ENCODE measurements at regions of chr6 and their contacts with region 1.

Region 1: GRCh38 chr6:30483677-30484279 is 5.5 kb upstream of the HLA-E start:
- DNase-seq: peak in 1 of 2 donors; percentile 53
- H3K4me3 ChIP-seq: no peak overlapping the region
- H3K27ac ChIP-seq: no peak overlapping the region
- H3K4me1 ChIP-seq: peaks cover 0 to under 1% of the 10 kb centered on the region in 2 donors
- H3K27me3 ChIP-seq: peaks cover 0 to 30% of the 10 kb centered on the region in 2 donors
- CTCF ChIP-seq: peak; percentile 46 to 88 (median 62)
- POLR2A ChIP-seq: no peak

Region 2: GRCh38 chr6:30515932-30516753 is 32.4 kb after region 1 on chr6:
- intact Hi-C with region 1: no loop called
- DNase-seq: peak; percentile 84 to 94
- H3K4me3 ChIP-seq: peak overlapping the region; percentile 37 to 44
- H3K27ac ChIP-seq: peak overlapping the region; percentile 88 to 91
- H3K4me1 ChIP-seq: no peaks in the 10 kb centered on the region
- H3K27me3 ChIP-seq: no peaks in the 10 kb centered on the region
- CTCF ChIP-seq: no peak
- POLR2A ChIP-seq: peak; percentile 51 to 75

Region 3: DNA sequence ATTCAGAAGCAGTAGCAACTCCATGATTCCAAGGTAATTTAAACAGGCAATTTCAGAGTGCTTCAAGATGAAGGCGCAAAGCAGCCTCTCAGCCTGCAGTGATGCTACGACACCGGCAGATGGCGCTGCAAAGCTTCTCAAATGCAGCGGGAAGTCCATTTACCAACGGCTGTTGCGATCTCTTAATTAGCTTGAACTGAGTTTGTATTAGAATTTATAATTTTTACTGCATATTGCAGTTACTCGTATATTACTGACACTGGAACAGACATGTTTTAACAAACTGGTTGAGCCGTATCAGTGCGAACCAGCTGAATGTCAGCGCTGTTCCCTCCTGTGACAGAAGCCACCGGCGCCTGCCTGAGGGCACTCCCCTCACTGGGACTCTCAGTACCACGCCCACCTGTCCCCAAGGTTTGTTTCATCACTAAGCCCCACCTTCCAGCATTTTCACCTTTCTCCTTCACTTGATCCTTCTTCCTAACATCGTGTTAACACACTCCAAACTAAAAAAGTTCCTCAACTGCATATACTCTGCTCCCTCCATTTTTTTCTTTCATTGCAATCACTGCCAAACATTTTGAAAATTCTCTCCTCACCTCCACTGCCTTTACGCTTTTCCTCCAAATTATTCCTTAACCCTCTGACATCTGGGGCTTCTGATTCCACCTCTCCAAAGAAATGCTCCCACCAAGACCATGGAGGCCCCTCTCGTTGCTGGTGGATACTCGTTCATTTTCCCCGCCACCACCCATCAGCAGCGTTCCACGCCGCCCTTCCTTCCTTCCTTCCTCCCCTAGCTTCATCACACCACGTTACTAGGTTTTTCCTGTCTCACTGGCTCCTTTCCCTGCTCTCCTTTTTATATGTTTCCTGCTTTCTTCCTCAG is 58.0 kb after region 1 on chr6:
- intact Hi-C with region 1: loop called (anchors 5 kb)
- DNase-seq: peak; percentile 72 to 77
- H3K4me3 ChIP-seq: peak overlapping the region in 1 of 2 donors; percentile 10
- H3K27ac ChIP-seq: peak overlapping the region in 1 of 2 donors; percentile 76
- H3K4me1 ChIP-seq: no peaks in the 10 kb centered on the region
- H3K27me3 ChIP-seq: no peaks in the 10 kb centered on the region
- CTCF ChIP-seq: peak; percentile 82 to 96 (median 94)
- POLR2A ChIP-seq: peak in 1 of 2 donors; percentile 20

Region 4: GRCh38 chr6:30599625-30600324 is 116.0 kb after region 1 on chr6:
- intact Hi-C with region 1: loop called (anchors 5 kb)
- DNase-seq: no peak
- H3K4me3 ChIP-seq: no peak overlapping the region
- H3K27ac ChIP-seq: no peak overlapping the region
- H3K4me1 ChIP-seq: no peaks in the 10 kb centered on the region
- H3K27me3 ChIP-seq: no peaks in the 10 kb centered on the region
- CTCF ChIP-seq: no peak
- POLR2A ChIP-seq: no peak

Measured in uterus (tissue), 4 donors.